Activated CD8-positive, alpha-beta memory T cell treated with anti-CD3 and anti-CD28 coated beads, Interleukin-2, amount 10 ng/mL, durations not matched to agents 7 days and 5 days (primary cell): ENCODE measurements at regions of chr20 and their contacts with region 1.

Region 1: DNA sequence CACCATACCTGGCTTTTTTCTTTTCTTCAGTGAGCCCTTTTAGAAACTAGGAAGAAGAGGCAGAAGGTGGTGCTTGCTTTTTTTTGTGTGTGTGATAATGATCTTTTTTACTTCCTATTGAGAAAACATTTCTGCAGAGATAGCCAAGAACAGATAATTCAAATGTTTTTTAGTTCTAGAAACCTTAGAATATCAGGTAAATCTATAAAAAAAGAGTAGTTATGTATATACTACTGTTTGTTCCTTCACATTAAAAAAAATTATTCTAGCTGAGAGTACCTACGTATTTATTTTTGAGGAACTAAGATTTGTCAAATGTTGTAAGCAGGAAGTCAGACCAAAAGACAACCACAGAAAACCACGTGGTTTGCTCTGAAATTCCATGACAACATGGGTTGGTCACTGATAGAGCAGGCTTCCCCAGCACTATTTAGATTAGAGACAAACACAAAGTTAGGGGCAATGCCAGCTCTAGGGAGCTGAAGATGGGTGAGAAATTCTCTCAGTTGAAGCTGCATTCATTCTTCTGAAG is 12.8 kb downstream of the STK4 start:
- DNase-seq: peak; percentile 89
- ATAC-seq: peak; percentile 80
- H3K4me3 Mint-ChIP-seq: peak overlapping the region; percentile 51
- H3K27ac Mint-ChIP-seq: peak overlapping the region; percentile 95
- H3K4me1 Mint-ChIP-seq: peaks cover 64% of the 10 kb centered on the region
- H3K27me3 Mint-ChIP-seq: no peaks in the 10 kb centered on the region

Region 2: GRCh38 chr20:44966030-44966961 is 12.9 kb before region 1 on chr20 and contains the start of gene STK4:
- CTCF ChIA-PET with region 1: interaction called, 31 read pairs
- DNase-seq: peak; percentile 96
- ATAC-seq: peak; percentile 83
- H3K4me3 Mint-ChIP-seq: peak within 1 kb of the TSS; percentile 93
- H3K27ac Mint-ChIP-seq: peak within 1 kb of the TSS; percentile 98
- H3K4me1 Mint-ChIP-seq: peaks cover 72% of the 10 kb centered on the region
- H3K27me3 Mint-ChIP-seq: no peaks in the 10 kb centered on the region
- total RNA-seq, gene STK4: 151 to 170 TPM

Region 3: DNA sequence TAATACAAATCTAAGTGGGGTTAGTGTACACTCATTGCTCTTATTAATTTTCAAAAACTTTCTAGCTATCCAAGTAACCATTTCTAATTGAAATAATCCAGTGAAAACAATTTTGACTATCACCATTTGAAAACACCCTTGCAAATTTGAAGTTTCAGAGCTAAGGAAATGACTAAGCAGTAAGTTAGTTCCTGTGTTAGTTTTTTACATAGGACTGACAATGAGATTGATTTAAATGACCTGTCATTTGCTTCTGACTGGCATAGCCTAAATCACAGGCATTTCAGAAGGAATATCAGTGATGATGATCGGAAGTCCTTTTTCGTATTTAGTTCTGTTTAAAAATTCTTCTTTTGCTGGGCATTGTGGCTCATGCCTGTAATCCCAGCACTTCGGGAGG is 14.2 kb after region 1 on chr20:
- CTCF ChIA-PET with region 1: interaction called, 14 read pairs
- DNase-seq: no peak
- ATAC-seq: peak; percentile 64
- H3K4me3 Mint-ChIP-seq: peak overlapping the region; percentile 46
- H3K27ac Mint-ChIP-seq: peak overlapping the region; percentile 80
- H3K4me1 Mint-ChIP-seq: peaks cover 62% of the 10 kb centered on the region
- H3K27me3 Mint-ChIP-seq: no peaks in the 10 kb centered on the region